ENCODE measurements at regions of chr2 and their contacts with region 1.

Region 1: GRCh38 chr2:63588385-63589147 is at the starts of genes MDH1 and WDPCP:
- DNase-seq: peak; percentile 86 to 99 (median 88)
- ATAC-seq: peak; percentile 86
- H3K4me3 ChIP-seq: peak within 1 kb of the TSS; percentile 96
- H3K4me3 Mint-ChIP-seq: peak within 1 kb of the TSS; percentile 93
- H3K27ac ChIP-seq: peak within 1 kb of the TSS; percentile 76 to 95
- H3K27ac Mint-ChIP-seq: peak within 1 kb of the TSS; percentile 87
- H3K4me1 ChIP-seq: peaks cover 19% of the 10 kb centered on the region
- H3K4me1 Mint-ChIP-seq: peaks cover 58% of the 10 kb centered on the region
- H3K27me3 ChIP-seq: no peaks in the 10 kb centered on the region
- H3K27me3 Mint-ChIP-seq: no peaks in the 10 kb centered on the region
- CTCF ChIP-seq: no peak
- total RNA-seq, gene MDH1: 96.3 to 97.6 TPM
- total RNA-seq, gene WDPCP: 8.7 to 9.9 TPM

Region 2: DNA sequence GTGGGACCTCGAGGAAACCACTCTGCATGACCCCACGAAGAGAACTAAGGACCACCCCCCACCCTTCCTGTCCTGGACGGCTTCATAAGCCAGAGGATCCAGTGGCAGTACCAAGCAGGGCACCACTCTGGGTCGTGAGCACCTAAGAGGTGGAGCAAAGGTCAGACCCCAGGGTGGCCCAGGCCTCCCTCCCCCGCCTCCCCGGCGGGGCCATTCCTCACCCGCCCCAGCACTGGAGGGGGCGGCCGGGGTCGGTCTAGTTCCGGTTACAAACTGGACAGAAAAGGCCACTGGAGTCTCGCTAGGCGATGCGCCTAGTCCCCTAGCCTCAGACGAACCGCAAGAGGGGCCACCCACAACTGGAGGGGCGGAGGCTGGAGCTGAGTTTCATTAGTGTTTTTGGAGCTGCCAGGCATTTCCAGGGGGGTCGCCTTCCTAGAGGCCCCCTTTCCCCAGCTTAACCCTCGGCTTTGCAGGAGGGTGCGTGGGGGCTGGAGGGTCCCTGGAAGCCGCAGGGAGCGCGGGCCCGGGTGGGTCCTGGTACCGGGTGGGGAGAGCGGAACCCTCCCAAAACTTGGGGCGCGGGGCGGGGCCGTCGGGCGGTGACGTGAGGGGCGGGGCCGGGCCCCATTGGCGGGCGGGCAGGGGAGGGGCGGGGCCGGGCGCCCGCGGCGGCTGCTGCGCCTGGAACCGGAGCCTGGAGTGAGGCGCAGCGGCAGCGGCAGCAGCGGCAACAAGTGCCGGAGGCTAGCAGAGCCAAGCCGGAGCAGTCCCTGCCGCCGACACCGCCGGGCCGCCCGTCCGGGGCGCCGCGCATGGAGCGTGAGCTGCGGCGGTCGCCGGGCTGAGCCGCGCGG is 1392.9 kb before region 1 on chr2 and contains the start of gene B3GNT2:
- CTCF ChIA-PET with region 1: no interaction called
- POLR2A ChIA-PET with region 1: no interaction called
- intact Hi-C with region 1: loop called in 1 of 2 experiments (anchors 5 kb)
- DNase-seq: peak; percentile 72 to 94 (median 82)
- ATAC-seq: peak; percentile 76
- H3K4me3 ChIP-seq: peak within 1 kb of the TSS; percentile 98
- H3K4me3 Mint-ChIP-seq: peak within 1 kb of the TSS; percentile 95
- H3K27ac ChIP-seq: peak within 1 kb of the TSS; percentile 75 to 88
- H3K27ac Mint-ChIP-seq: peak within 1 kb of the TSS; percentile 78
- H3K4me1 ChIP-seq: peaks cover 32% of the 10 kb centered on the region
- H3K4me1 Mint-ChIP-seq: peaks cover 28% of the 10 kb centered on the region
- H3K27me3 ChIP-seq: no peaks in the 10 kb centered on the region
- H3K27me3 Mint-ChIP-seq: no peaks in the 10 kb centered on the region
- CTCF ChIP-seq: no peak
- total RNA-seq, gene B3GNT2: 47.7 TPM

Region 3: DNA sequence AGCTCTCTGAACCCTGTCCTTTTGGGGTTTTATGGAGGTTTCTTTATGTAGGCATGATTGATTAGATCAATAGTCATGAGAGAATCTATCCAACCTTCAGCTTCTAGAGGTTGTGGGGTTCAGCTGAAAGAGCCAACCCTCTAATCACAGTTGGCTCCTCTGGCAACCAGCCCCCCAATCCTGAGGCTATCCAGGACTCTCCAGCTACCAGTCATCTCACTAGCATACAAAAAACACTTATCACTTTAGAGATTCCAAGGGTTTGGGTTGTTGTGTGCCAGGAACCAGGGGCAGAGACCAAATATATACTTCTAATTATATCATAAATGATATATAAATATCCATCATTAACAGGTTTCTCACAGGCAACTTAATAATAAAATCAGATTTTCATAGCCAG is 12.0 kb before region 1 on chr2:
- CTCF ChIA-PET with region 1: no interaction called
- POLR2A ChIA-PET with region 1: interaction called, 15 read pairs
- intact Hi-C with region 1: no loop called
- DNase-seq: no peak
- ATAC-seq: no peak
- H3K4me3 ChIP-seq: no peak overlapping the region
- H3K4me3 Mint-ChIP-seq: no peak overlapping the region
- H3K27ac ChIP-seq: no peak overlapping the region
- H3K27ac Mint-ChIP-seq: no peak overlapping the region
- H3K4me1 ChIP-seq: no peaks in the 10 kb centered on the region
- H3K4me1 Mint-ChIP-seq: peaks cover 6% of the 10 kb centered on the region
- H3K27me3 ChIP-seq: no peaks in the 10 kb centered on the region
- H3K27me3 Mint-ChIP-seq: no peaks in the 10 kb centered on the region
- CTCF ChIP-seq: no peak

Region 4: GRCh38 chr2:63841254-63842022 is 252.9 kb after region 1 on chr2 and contains the start of gene UGP2:
- CTCF ChIA-PET with region 1: interaction called, 3 read pairs
- POLR2A ChIA-PET with region 1: interaction called, 51 read pairs
- intact Hi-C with region 1: loop called (anchors 2 to 5 kb)
- DNase-seq: peak; percentile 70 to 92 (median 82)
- ATAC-seq: peak; percentile 64
- H3K4me3 ChIP-seq: peak within 1 kb of the TSS; percentile 99
- H3K4me3 Mint-ChIP-seq: peak within 1 kb of the TSS; percentile 99
- H3K27ac ChIP-seq: peak within 1 kb of the TSS; percentile 87
- H3K27ac Mint-ChIP-seq: peak within 1 kb of the TSS; percentile 97
- H3K4me1 ChIP-seq: peaks cover 29% of the 10 kb centered on the region
- H3K4me1 Mint-ChIP-seq: peaks cover 47% of the 10 kb centered on the region
- H3K27me3 ChIP-seq: no peaks in the 10 kb centered on the region
- H3K27me3 Mint-ChIP-seq: no peaks in the 10 kb centered on the region
- CTCF ChIP-seq: peak; percentile 15
- total RNA-seq, gene UGP2: 47.1 to 53.2 TPM

Region 5: DNA sequence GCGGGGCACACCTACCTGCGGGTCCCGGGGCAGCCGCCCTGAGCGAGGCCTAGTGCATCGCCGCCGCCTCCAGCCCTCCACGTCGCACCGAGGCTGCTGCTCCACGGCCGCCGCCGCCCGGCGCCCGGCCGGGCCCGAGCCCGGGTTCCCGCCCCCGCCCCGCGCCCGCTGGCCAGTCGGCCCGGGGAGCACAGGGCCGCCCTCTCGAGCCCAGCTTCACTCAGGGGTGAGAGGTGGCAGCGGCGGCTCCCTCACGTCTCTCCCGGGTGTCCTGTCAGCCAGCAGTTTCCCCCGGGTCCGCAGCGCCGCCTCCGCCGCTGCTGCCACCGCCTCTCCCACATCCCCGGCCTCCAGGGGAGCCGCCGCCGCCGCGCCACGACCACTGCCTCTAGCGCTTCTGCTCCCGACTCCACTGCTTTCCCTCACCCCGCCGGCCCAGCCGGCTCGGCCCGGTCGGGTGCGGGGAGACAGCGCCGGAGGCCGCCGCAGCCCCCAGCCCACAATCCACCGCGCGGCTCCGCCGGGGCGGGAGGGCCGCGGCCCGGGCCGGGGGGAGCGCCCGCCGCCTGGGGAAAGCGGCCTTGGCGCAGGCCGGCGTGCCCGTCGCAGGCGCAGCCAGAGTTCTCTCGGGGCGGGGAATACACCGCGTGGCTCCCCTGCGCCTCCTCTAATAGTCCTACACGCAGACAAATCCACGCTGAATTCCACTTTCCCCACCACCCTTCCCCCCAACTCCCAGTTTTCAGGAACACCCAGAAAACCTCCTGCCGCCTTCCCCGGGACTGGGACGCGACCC is 430.6 kb after region 1 on chr2 and contains the start of gene VPS54:
- CTCF ChIA-PET with region 1: no interaction called
- POLR2A ChIA-PET with region 1: no interaction called
- intact Hi-C with region 1: loop called in 1 of 2 experiments (anchors 5 kb)
- DNase-seq: peak; percentile 40 to 80 (median 48)
- ATAC-seq: peak; percentile 74
- H3K4me3 ChIP-seq: peak within 1 kb of the TSS; percentile 71
- H3K4me3 Mint-ChIP-seq: peak within 1 kb of the TSS; percentile 100
- H3K27ac ChIP-seq: peak within 1 kb of the TSS; percentile 35 to 54
- H3K27ac Mint-ChIP-seq: peak within 1 kb of the TSS; percentile 95
- H3K4me1 ChIP-seq: peaks cover 12% of the 10 kb centered on the region
- H3K4me1 Mint-ChIP-seq: peaks cover 46% of the 10 kb centered on the region
- H3K27me3 ChIP-seq: no peaks in the 10 kb centered on the region
- H3K27me3 Mint-ChIP-seq: no peaks in the 10 kb centered on the region
- CTCF ChIP-seq: no peak
- total RNA-seq, gene VPS54: 9.5 to 10.8 TPM

Region 6: DNA sequence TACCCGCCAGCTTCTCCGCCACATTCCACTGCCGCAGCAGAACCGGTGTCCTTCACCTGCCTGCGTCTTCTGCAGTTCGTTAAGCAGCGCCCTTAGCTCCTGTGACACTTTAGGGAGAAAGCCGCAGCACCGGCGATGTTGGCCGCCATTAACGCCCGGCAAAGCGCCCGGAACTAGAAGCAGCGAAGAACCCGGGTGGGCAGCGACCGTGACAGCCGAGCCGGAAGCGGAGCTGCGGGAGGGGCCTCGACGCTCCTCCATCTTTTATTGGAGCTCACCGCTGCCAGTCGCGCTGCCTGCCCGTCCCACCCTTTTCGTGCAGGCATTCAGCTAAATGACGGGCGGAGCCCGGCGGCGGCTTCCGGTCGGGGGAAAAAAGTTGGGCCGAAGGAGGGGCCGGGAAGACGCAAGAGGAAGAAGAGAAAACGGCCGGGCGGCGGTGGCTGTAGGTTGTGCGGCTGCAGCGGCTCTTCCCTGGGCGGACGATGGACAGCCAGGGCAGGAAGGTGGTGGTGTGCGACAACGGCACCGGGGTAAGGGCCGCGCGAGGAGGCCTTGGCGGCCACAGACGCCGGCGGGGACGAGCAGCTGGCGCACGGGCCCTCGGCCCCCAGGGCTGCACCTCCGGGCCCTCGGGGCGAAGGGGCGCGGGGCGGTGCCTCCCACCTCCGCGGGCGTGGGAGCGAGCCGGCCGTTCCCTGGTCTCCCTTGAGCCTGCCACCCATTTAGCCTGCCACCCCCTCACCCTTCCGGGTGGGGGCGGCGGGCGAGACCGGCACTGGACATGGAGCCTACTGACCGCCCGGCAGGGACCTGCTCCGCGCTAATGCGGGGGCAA is 1639.1 kb after region 1 on chr2 and contains the start of gene ACTR2:
- CTCF ChIA-PET with region 1: no interaction called
- POLR2A ChIA-PET with region 1: interaction called, 16 read pairs
- intact Hi-C with region 1: loop called in 1 of 2 experiments (anchors 2 kb)
- DNase-seq: peak; percentile 87 to 98 (median 92)
- ATAC-seq: peak; percentile 93
- H3K4me3 ChIP-seq: peak within 1 kb of the TSS; percentile 76
- H3K4me3 Mint-ChIP-seq: peak within 1 kb of the TSS; percentile 100
- H3K27ac ChIP-seq: peak within 1 kb of the TSS; percentile 97 to 98
- H3K27ac Mint-ChIP-seq: peak within 1 kb of the TSS; percentile 98
- H3K4me1 ChIP-seq: peaks cover 35% of the 10 kb centered on the region
- H3K4me1 Mint-ChIP-seq: peaks cover 53% of the 10 kb centered on the region
- H3K27me3 ChIP-seq: no peaks in the 10 kb centered on the region
- H3K27me3 Mint-ChIP-seq: no peaks in the 10 kb centered on the region
- CTCF ChIP-seq: no peak
- total RNA-seq, gene ACTR2: 128 to 130 TPM